Calu3 (cell line): ENCODE measurements at regions of chr9 and their contacts with region 1.

Region 1: GRCh38 chr9:131138676-131139075 is 13.3 kb downstream of the NUP214 start:
- DNase-seq: no peak
- H3K4me3 Mint-ChIP-seq: no peak overlapping the region
- H3K27ac Mint-ChIP-seq: no peak overlapping the region
- H3K4me1 Mint-ChIP-seq: no peaks in the 10 kb centered on the region
- H3K27me3 Mint-ChIP-seq: no peaks in the 10 kb centered on the region
- CTCF ChIP-seq: no peak

Region 2: GRCh38 chr9:131160416-131161112 is 21.9 kb after region 1 on chr9:
- CTCF ChIA-PET with region 1: no interaction called
- intact Hi-C with region 1: loop called (anchors 1 kb)
- DNase-seq: no peak
- H3K4me3 Mint-ChIP-seq: no peak overlapping the region
- H3K27ac Mint-ChIP-seq: no peak overlapping the region
- H3K4me1 Mint-ChIP-seq: no peaks in the 10 kb centered on the region
- H3K27me3 Mint-ChIP-seq: no peaks in the 10 kb centered on the region
- CTCF ChIP-seq: no peak